ENCODE measurements at regions of chr13 and their contacts with region 1.

Region 1: GRCh38 chr13:46721054-46721453 is 75.9 kb downstream of the ESD start:
- DNase-seq: peak; percentile 53 to 58
- H3K4me3 ChIP-seq: no peak overlapping the region
- H3K27ac ChIP-seq: no peak overlapping the region
- H3K4me1 ChIP-seq: no peaks in the 10 kb centered on the region
- H3K27me3 ChIP-seq: no peaks in the 10 kb centered on the region
- CTCF ChIP-seq: peak in 5 of 6 experiments; percentile 34 to 93 (median 64)
- POLR2A ChIP-seq: no peak

Region 2: GRCh38 chr13:46492946-46493345 is 228.1 kb before region 1 on chr13:
- intact Hi-C with region 1: loop called (anchors 5 kb)
- DNase-seq: no peak
- H3K4me3 ChIP-seq: no peak overlapping the region
- H3K27ac ChIP-seq: no peak overlapping the region
- H3K4me1 ChIP-seq: no peaks in the 10 kb centered on the region
- H3K27me3 ChIP-seq: no peaks in the 10 kb centered on the region
- CTCF ChIP-seq: peak; percentile 12 to 59 (median 44)
- POLR2A ChIP-seq: no peak

Region 3: DNA sequence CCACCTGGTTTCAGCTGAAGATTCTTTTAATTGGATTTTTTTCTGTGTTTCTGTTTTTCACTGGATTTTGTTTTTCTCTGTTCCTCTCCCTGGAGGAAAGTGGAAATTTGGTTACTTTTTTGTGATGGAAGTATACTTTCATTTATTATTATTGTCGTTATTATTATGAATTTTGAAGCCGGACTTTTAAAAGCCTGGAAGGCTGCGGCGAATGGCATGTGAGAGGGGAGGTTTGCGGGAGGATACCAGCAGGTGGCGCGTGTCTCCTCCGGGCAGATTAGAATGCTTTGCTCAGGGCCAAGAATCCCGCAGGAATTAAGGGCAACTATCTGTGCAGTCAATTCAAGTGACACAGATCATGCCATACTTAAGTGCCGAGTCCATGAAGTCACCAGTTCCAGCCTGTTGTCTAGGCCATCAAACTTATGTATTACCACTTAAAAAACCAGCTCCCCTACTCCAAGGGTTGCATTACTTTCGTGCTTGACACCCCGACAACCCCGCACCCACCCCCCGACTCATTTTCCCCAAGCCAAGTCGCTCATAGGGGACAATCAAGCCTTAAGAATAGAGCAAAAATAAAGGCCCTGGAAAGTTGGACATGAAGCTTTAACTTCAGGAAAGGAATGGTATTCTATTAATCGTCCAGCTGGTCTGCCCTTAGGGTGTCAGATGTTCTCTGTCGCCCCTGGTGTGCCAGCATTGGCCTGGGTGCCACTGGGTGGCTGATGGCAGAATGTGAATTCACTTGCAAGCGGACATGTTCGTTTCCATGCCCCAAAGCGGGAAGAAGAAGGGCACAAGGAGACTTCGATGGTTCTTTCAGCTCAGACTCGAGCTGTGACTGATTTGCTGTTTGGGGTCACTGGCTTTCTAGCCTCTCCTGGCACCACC is 169.4 kb before region 1 on chr13:
- intact Hi-C with region 1: loop called (anchors 2 kb)
- DNase-seq: peak; percentile 79 to 80
- H3K4me3 ChIP-seq: peak overlapping the region in 1 of 3 donors; percentile 61
- H3K27ac ChIP-seq: no peak overlapping the region
- H3K4me1 ChIP-seq: peaks cover 7 to 13% of the 10 kb centered on the region in 2 donors
- H3K27me3 ChIP-seq: no peaks in the 10 kb centered on the region
- CTCF ChIP-seq: peak; percentile 63 to 85 (median 72)
- POLR2A ChIP-seq: no peak